ENCODE measurements at regions of chr2 and their contacts with region 1.

Region 1: GRCh38 chr2:190088917-190089316 is 26.4 kb upstream of the MSTN start:
- DNase-seq: peak; percentile 9
- H3K4me3 ChIP-seq: no peak overlapping the region
- H3K27me3 ChIP-seq: no peaks in the 10 kb centered on the region
- CTCF ChIP-seq: peak; percentile 64

Region 2: DNA sequence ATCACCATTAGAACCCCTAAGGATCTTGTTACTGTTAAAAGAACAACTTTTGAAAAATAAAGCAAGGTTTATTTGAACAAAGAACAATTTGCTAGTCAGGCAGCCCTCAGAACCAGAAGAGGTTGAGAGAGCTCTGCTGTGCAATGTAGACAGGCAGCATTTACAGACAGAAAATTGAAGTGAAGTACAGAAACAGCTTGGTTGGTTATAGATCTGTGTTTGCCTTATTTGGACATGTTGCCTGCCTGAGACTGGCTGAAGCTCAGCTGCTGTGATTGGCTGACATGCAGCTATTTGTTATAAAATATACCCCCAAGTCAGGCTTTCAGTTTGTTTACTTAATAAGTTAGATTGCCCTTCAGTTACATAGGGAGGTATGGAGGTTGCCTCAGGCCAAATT is 38.9 kb before region 1 on chr2:
- CTCF ChIA-PET with region 1: no interaction called
- POLR2A ChIA-PET with region 1: no interaction called
- DNase-seq: no peak
- H3K4me3 ChIP-seq: no peak overlapping the region
- H3K27me3 ChIP-seq: no peaks in the 10 kb centered on the region
- CTCF ChIP-seq: no peak

Region 3: GRCh38 chr2:190277234-190278112 is 188.6 kb after region 1 on chr2:
- CTCF ChIA-PET with region 1: interaction called, 10 read pairs
- POLR2A ChIA-PET with region 1: no interaction called
- DNase-seq: no peak
- H3K4me3 ChIP-seq: no peak overlapping the region
- H3K27me3 ChIP-seq: no peaks in the 10 kb centered on the region
- CTCF ChIP-seq: peak; percentile 58

Region 4: DNA sequence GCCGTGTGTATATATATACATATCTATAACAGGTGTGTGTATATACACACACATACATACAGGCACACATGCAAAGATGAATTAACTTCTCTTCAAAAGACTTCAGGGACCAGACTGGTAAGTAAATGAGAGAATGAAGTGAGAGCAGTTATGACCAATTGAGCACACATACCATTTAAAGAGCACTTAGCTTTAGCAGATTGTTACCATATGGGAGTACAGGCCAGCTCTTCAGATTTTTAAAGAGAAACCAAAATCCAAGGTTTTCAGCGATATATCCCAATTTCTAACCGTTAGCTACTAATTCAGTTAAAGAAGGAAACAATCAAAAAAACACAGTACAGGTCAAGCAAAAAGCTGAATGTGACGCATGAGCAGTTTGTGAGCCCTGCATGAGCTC is 278.2 kb after region 1 on chr2:
- CTCF ChIA-PET with region 1: interaction called, 10 read pairs
- POLR2A ChIA-PET with region 1: no interaction called
- DNase-seq: no peak
- H3K4me3 ChIP-seq: no peak overlapping the region
- H3K27me3 ChIP-seq: no peaks in the 10 kb centered on the region
- CTCF ChIP-seq: no peak